Spleen (tissue), 13 donors: ENCODE measurements at regions of chr7 and their contacts with region 1.

Region 1: GRCh38 chr7:137172105-137172590 is 171.4 kb downstream of the PTN start:
- DNase-seq: no peak
- H3K4me3 ChIP-seq: no peak overlapping the region
- H3K27ac ChIP-seq: no peak overlapping the region
- H3K4me1 ChIP-seq: no peaks in the 10 kb centered on the region
- H3K27me3 ChIP-seq: no peaks in the 10 kb centered on the region
- CTCF ChIP-seq: no peak
- POLR2A ChIP-seq: no peak

Region 2: GRCh38 chr7:137282043-137282442 is 109.9 kb after region 1 on chr7:
- intact Hi-C with region 1: no loop called
- DNase-seq: no peak
- H3K4me3 ChIP-seq: no peak overlapping the region
- H3K27ac ChIP-seq: no peak overlapping the region
- H3K4me1 ChIP-seq: no peaks in the 10 kb centered on the region
- H3K27me3 ChIP-seq: no peaks in the 10 kb centered on the region
- CTCF ChIP-seq: no peak
- POLR2A ChIP-seq: no peak

Region 3: GRCh38 chr7:137454246-137454724 is 282.1 kb after region 1 on chr7:
- intact Hi-C with region 1: loop called (anchors 5 kb)
- DNase-seq: no peak
- H3K4me3 ChIP-seq: no peak overlapping the region
- H3K27ac ChIP-seq: no peak overlapping the region
- H3K4me1 ChIP-seq: peaks cover 0 to 3% (median 0%) of the 10 kb centered on the region in 6 donors
- H3K27me3 ChIP-seq: no peaks in the 10 kb centered on the region
- CTCF ChIP-seq: peak in 10 of 11 experiments; percentile 7 to 76 (median 60)
- POLR2A ChIP-seq: no peak

Region 4: DNA sequence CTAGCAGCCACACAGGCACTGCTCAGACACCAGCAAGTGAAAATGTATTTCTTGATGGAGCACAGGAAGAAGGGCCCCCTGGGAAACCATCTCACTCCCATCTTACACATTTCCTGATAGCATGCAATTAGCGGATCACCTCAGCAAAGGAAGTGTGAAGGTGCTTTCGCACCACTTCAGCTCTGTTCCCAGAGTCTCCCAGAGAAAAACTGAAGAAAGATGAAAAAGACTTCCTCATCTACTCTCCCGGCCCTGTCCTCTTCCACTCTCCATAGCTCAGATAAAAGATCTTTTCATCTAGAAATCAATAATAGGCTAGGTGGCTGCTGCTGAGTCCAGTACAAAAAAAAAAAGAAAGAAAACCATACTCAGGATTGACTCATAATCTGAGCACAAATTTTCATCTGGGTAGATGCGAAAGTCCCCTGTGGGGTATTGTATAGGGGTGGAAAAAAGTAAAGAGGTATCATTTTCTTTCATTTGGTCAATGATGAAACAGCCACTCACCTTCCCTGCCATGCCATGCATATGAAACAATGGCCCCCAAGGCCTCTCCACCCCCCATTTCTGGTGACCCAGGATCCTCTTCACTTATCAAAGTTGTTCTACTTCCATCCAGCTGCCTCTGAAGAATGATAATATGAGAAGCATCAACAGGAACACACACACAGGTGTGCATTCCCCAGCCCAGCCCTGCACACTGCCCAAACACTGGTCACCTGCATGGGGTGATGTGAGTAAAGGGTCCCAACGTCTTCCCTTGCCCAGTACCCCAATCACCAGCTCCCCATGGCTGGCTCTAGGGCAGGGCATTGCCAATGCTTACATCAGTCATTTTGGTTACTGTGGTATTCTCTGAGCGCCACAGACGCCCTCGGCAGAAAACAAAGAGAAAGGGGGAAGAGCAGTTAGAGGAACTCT is 723.4 kb after region 1 on chr7:
- intact Hi-C with region 1: no loop called
- DNase-seq: no peak
- H3K4me3 ChIP-seq: no peak overlapping the region
- H3K27ac ChIP-seq: no peak overlapping the region
- H3K4me1 ChIP-seq: peaks cover 6 to 25% (median 18%) of the 10 kb centered on the region in 6 donors
- H3K27me3 ChIP-seq: no peaks in the 10 kb centered on the region
- CTCF ChIP-seq: no peak
- POLR2A ChIP-seq: no peak